ENCODE measurements at regions of chr11 and their contacts with region 1.

Region 1: DNA sequence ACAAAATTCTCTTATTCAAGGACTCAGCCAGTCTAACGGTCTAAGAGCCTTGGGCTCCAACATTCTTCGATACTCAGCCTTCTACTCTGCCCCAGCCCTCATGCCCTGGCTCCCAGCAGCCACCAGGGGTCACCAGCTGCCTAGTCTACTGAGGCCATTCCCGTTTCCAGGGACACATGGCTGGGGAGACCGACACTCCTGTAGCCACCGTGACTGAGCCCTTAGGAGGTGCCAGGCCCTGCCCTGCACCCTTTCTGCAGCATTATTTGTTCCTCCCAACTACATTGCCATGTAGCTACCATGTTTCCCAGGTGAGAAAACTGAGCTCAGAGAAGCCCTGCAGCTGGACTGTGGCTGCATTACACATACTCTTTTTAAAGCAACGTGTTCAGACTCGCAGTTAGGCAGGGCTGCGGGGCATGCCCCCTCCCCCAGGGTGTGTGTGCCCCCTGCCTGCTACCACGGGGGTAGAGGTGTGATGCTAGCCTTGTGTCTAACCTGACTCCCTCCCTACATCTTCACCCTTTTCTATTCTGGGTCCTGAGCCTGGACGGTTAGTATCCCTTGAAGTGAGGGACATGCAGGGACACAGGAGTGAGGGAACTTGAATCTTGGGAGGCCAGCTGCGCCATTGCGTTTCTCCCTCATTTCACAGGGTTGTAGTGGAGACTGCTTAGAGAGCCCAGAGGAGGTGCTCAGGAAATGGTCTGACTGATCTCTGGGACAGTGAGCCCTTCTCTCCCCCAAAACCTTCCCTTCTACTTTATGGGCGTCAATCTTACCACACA is 17.5 kb downstream of the ATG16L2 start:
- ATAC-seq: peak; percentile 76 to 98 (median 95)
- H3K4me3 ChIP-seq: no peak overlapping the region
- H3K27ac ChIP-seq: no peak overlapping the region
- H3K4me1 ChIP-seq: peaks cover 2 to 11% of the 10 kb centered on the region in 2 donors

Region 2: GRCh38 chr11:73177778-73178577 is 346.3 kb after region 1 on chr11:
- in situ Hi-C with region 1: loop called in 5 of 9 experiments (anchors 10 to 25 kb)
- ATAC-seq: peak; percentile 84 to 98 (median 88)
- H3K4me3 ChIP-seq: no peak overlapping the region
- H3K27ac ChIP-seq: no peak overlapping the region
- H3K4me1 ChIP-seq: peaks cover 9 to 11% of the 10 kb centered on the region in 2 donors

Region 3: DNA sequence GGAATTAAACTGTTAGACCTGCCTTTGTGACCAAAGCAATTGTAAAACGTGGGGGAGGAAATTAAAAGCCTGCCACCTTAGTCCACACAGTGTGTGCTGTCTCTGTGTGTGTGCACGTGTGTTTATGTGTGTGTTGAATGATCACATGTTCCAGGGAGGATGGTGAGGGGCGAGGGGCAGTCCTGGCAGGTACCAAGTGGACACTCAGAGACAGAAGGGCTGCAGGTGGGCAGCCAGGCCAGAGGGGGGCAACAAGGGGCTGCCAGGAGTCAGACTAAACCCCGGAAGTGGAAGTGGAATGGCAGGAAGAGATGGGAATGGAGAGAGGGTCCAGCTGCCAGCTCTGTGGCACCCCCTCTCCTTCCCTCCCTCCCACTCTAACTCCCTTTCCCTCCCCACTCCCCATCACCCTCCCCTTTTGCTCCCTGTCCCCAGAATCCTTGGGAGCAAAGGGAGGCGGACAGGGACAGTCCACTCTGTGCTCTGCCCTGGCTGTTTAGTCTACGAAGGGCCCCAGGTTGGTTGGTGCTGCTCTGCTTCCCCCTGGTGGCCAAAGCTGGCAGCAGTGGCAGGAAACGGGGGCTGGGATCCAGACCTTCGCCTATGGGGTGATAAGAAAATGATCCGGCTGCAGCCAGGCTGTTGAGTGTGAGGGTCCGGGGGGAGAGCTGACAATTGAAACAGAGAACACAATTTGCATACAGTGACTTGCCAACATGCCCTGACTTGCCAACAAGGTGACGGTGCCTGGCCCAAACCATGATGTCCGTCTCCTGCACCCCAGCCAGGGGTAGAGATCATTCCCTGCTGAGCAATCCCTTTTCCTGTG is 410.8 kb after region 1 on chr11:
- in situ Hi-C with region 1: loop called in 1 of 9 experiments (anchors 25 kb)
- ATAC-seq: peak; percentile 85 to 94 (median 90)
- H3K4me3 ChIP-seq: peak overlapping the region in 2 of 5 donors; percentile 5 to 25
- H3K27ac ChIP-seq: no peak overlapping the region
- H3K4me1 ChIP-seq: peaks cover 10 to 14% of the 10 kb centered on the region in 2 donors